Gastrocnemius medialis (tissue), 4 donors: ENCODE measurements at regions of chr3 and their contacts with region 1.

Region 1: DNA sequence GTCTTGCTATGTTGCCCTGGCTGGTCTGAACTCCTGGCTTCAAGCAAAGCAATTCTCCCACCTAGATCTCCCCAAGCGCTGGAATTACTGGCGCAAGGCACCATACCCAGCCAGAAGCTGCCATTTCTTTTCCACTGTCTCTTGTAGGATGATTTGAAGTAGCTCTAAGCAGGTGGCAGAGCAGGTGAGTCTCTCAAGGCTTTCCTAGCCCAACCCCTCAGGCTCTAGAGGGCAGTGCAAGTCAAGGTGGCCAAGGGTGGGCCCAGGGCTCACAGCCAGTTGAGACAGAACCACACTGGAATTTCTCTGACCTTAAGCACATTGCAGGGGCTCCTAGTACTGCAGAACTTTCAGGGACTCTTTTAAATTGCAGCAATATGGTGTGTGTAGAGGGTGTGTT is 15.6 kb upstream of the DAG1 start:
- DNase-seq: peak in 1 of 2 donors; percentile 42
- ATAC-seq: peak; percentile 44 to 73
- H3K4me3 ChIP-seq: no peak overlapping the region
- H3K27ac ChIP-seq: peak overlapping the region; percentile 7 to 57 (median 28)
- H3K4me1 ChIP-seq: peaks cover 18 to 20% of the 10 kb centered on the region in 2 donors
- H3K27me3 ChIP-seq: no peaks in the 10 kb centered on the region
- CTCF ChIP-seq: peak in 4 of 5 experiments; percentile 14 to 69 (median 32)
- POLR2A ChIP-seq: no peak

Region 2: GRCh38 chr3:49165771-49166751 is 288.4 kb before region 1 on chr3 and contains the start of gene CCDC71:
- in situ Hi-C with region 1: loop called (anchors 10 kb)
- intact Hi-C with region 1: loop called (anchors 1 kb)
- DNase-seq: peak in 1 of 2 donors; percentile 69
- ATAC-seq: peak; percentile 65 to 68
- H3K4me3 ChIP-seq: peak within 1 kb of the TSS; percentile 64 to 88 (median 81)
- H3K27ac ChIP-seq: peak within 1 kb of the TSS; percentile 80 to 92 (median 86)
- H3K4me1 ChIP-seq: peaks cover 23 to 33% of the 10 kb centered on the region in 2 donors
- H3K27me3 ChIP-seq: no peaks in the 10 kb centered on the region
- CTCF ChIP-seq: no peak
- POLR2A ChIP-seq: peak; percentile 54 to 81
- total RNA-seq, gene CCDC71: 20.0 to 31.0 (median 22.0) TPM

Region 3: GRCh38 chr3:49295489-49296058 is 158.9 kb before region 1 on chr3:
- in situ Hi-C with region 1: no loop called
- intact Hi-C with region 1: loop called (anchors 1 kb)
- DNase-seq: no peak
- ATAC-seq: no peak
- H3K4me3 ChIP-seq: no peak overlapping the region
- H3K27ac ChIP-seq: peak overlapping the region; percentile 73 to 89 (median 86)
- H3K4me1 ChIP-seq: peaks cover 32 to 36% of the 10 kb centered on the region in 2 donors
- H3K27me3 ChIP-seq: no peaks in the 10 kb centered on the region
- CTCF ChIP-seq: peak; percentile 35 to 59 (median 46)
- POLR2A ChIP-seq: no peak

Region 4: GRCh38 chr3:49519296-49519695 is 64.8 kb after region 1 on chr3:
- in situ Hi-C with region 1: no loop called
- intact Hi-C with region 1: loop called (anchors 5 kb)
- DNase-seq: no peak
- ATAC-seq: no peak
- H3K4me3 ChIP-seq: no peak overlapping the region
- H3K27ac ChIP-seq: peak overlapping the region; percentile 67 to 84 (median 79)
- H3K4me1 ChIP-seq: peaks cover 60 to 64% of the 10 kb centered on the region in 2 donors
- H3K27me3 ChIP-seq: no peaks in the 10 kb centered on the region
- CTCF ChIP-seq: no peak
- POLR2A ChIP-seq: no peak

Region 5: GRCh38 chr3:49673715-49674496 is 219.4 kb after region 1 on chr3 and contains the start of gene APEH:
- in situ Hi-C with region 1: no loop called
- intact Hi-C with region 1: loop called (anchors 1 kb)
- DNase-seq: peak; percentile 93 to 98
- ATAC-seq: peak; percentile 86 to 88
- H3K4me3 ChIP-seq: peak within 1 kb of the TSS; percentile 80 to 98 (median 92)
- H3K27ac ChIP-seq: peak within 1 kb of the TSS; percentile 91 to 96 (median 94)
- H3K4me1 ChIP-seq: peaks cover 16 to 17% of the 10 kb centered on the region in 2 donors
- H3K27me3 ChIP-seq: no peaks in the 10 kb centered on the region
- CTCF ChIP-seq: peak in 1 of 5 experiments; percentile 10
- POLR2A ChIP-seq: peak; percentile 75 to 82
- total RNA-seq, gene APEH: 103 to 140 (median 108) TPM

Region 6: DNA sequence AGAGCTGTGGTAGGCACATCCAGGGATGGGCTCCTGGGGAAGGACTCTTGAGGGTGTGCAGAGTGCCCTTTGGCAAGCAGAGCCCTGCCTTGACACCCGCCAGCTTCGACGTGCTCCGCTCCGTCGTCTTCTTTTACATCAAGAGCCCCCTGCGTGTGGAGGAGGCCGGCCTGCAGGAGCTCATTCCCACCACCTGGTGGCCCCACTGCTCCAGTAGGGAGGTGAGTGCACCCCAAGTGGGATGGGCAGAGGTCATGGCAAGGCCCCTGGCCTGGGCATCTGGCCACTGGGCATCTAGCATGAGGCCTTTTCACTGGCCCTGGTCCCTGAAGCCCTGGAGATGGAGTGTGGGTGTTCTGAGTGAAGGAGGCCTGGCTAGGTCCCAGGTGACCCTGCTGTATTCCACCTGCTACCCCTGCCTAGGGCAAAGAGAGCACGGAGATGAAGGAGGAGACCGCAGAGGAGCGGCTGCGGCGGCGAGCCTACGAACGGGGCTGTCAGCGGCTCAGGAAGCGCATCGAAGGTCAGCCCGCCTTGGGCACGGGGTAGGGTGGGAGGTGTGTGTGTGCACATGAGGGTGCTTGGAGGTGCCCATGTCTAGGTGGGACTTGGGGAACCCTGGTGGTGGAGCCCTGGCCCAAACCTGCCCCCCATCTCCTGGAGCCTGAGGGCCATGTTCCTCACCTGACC is 247.1 kb after region 1 on chr3:
- in situ Hi-C with region 1: no loop called
- intact Hi-C with region 1: no loop called
- DNase-seq: no peak
- ATAC-seq: no peak
- H3K4me3 ChIP-seq: no peak overlapping the region
- H3K27ac ChIP-seq: peak overlapping the region in 1 of 4 donors; percentile 98
- H3K4me1 ChIP-seq: peaks cover 0 to 5% of the 10 kb centered on the region in 2 donors
- H3K27me3 ChIP-seq: no peaks in the 10 kb centered on the region
- CTCF ChIP-seq: peak in 4 of 5 experiments; percentile 29 to 52 (median 37)
- POLR2A ChIP-seq: no peak